Psoas muscle (tissue), 8 donors: ENCODE measurements at regions of chr17 and their contacts with region 1.

Region 1: DNA sequence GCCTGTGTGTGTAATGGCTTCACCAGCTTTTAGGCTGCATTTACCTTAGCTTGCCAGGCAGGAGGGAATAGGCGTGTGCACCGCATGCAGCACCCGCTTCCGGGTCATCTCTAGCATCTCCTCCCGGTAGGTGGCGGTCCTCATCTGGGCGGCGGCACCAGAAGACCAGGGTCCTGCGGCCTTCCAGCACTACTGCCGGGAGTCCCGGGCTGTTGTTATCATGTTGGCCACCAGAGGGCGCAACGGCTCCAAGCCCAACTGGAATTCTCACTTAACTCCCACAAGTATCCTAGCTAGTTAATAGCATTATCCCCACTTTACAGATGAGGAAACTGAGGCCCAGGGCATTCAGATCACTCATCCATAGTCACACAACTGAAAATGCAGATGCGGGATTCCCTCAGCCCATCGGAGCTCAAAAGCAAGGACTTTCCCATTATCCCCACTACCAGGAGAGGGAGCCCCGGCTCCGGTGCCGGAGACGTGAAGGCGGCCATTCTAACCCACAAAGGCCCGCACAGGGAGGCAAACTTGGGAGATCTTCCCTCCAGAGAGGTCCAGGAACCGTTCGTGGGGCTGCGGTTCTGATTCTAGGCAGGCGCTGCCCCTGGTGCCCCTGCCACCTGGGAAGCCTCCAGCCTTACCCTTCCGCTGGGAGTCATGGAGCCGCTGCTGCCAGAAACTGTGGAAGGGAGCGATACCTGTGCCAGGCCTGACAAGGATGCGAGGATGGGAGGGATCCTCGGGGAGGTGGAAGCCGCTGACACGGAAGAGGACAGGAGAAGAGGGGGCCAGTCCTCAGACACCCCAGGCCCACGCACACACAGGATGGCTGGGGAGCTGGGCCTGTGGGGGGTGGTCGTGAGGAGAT is 23.9 kb downstream of the LGALS9 start:
- DNase-seq: peak; percentile 69 to 81
- ATAC-seq: peak; percentile 42 to 67 (median 63)
- H3K4me3 ChIP-seq: no peak overlapping the region
- H3K27ac ChIP-seq: no peak overlapping the region
- H3K4me1 ChIP-seq: no peaks in the 10 kb centered on the region
- H3K27me3 ChIP-seq: no peaks in the 10 kb centered on the region
- CTCF ChIP-seq: peak; percentile 92

Region 2: DNA sequence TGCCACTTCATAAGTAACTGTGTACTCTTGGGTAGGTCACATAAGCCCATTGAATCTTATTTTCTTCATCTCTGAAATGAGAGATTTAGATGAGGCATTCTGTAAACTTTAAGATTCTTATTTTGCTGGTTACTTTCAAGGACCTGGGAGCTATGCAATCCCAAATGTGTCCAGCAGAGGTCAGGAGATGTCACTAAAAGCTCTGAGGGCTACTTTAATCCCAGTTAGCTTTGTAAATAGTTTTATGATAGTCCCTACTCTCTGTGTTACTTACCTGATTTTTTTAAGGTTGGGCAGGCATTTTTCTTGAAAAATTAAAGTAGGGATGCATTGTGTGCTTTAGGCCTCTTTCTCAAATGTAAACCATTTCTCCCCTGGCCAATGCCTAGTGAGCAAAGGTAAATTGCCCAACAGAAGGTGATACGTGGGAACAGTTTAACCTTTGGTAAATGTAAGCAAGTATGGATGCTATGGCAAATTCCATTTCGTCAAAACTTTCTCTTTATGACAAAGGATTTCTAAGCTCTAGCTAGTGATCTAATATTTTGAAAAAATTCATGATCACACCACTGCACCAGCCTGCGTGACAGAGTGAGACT is 418.1 kb before region 1 on chr17:
- intact Hi-C with region 1: loop called (anchors 2 to 10 kb)
- DNase-seq: peak; percentile 57 to 67
- ATAC-seq: peak; percentile 85 to 90 (median 88)
- H3K4me3 ChIP-seq: no peak overlapping the region
- H3K27ac ChIP-seq: no peak overlapping the region
- H3K4me1 ChIP-seq: no peaks in the 10 kb centered on the region
- H3K27me3 ChIP-seq: no peaks in the 10 kb centered on the region
- CTCF ChIP-seq: peak; percentile 99

Region 3: DNA sequence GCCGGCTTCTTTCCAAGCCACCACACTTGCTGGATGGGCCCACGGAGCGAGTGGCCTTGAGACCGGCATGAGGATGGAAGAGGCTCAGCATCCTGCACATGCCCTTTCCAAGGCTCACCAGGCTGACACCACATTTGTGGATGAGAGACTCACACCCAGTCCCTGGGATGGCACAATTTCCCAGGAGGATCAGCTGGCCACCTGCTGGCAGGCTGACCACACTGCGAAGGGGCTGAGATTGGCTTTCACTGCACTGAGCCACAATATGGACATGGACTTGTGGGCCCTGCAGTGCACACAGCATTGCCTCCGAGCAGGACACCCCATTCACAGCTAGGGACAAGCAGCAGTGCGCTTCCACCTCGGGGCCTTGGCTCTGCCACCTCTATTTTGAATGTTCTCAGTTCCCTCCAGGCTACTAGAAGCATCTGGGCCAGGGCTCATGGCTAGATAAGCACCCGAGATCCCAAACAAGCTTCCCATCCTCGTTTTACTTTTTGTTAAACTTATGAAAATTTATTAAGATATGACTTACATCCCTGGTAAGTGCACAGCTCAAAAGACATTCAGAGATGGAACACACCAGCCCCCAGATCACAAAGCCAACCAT is 223.9 kb before region 1 on chr17:
- intact Hi-C with region 1: no loop called
- DNase-seq: peak in 1 of 2 donors; percentile 31
- ATAC-seq: peak in 3 of 4 donors; percentile 49 to 67 (median 50)
- H3K4me3 ChIP-seq: no peak overlapping the region
- H3K27ac ChIP-seq: no peak overlapping the region
- H3K4me1 ChIP-seq: no peaks in the 10 kb centered on the region
- H3K27me3 ChIP-seq: no peaks in the 10 kb centered on the region
- CTCF ChIP-seq: peak; percentile 40

Region 4: GRCh38 chr17:27601069-27601975 is 53.6 kb before region 1 on chr17:
- intact Hi-C with region 1: loop called (anchors 1 kb)
- DNase-seq: peak; percentile 66 to 81
- ATAC-seq: peak; percentile 59 to 76 (median 60)
- H3K4me3 ChIP-seq: no peak overlapping the region
- H3K27ac ChIP-seq: peak overlapping the region; percentile 7
- H3K4me1 ChIP-seq: no peaks in the 10 kb centered on the region
- H3K27me3 ChIP-seq: no peaks in the 10 kb centered on the region
- CTCF ChIP-seq: peak; percentile 96

Region 5: DNA sequence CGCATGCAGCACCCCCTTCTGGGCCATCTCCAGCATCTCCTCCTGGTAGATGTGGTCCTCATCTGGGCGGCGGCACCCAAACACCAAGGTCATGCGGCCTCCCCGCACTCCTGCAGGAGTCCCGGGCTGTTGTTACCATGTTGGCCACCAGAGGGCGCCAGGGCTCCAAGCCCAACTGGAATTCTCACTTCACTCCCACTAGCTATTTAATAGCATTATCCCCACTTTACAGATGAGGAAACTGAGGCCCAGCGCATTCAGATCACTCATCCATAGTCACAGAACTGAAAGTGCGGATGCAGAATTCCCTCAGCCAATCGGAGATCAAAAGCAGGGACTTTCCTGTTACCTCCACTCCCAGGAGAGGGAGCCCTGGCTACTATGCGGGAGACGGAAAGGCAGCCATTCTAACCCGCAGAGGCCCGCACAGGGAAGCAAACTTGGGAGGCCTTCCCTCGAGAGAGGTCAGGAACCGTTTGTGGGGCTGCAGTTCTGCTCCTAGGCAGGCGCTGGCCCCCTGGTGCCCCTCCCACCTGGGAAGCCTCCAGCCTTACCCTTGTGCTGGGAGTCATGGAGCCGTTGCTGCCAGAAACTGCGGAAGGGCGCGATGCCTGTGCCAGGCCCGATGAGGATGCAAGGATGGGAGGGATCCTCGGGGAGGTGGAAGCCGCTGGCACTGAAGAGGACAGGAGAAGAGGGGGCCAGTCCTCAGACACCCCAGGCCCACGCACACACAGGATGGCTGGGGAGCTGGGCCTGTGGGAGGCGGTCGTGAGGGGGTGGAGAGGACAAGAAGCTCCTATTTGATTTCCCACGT is 105.4 kb after region 1 on chr17:
- intact Hi-C with region 1: loop called (anchors 2 to 5 kb)
- DNase-seq: peak; percentile 63 to 76
- ATAC-seq: peak in 3 of 4 donors; percentile 46 to 65 (median 56)
- H3K4me3 ChIP-seq: no peak overlapping the region
- H3K27ac ChIP-seq: no peak overlapping the region
- H3K4me1 ChIP-seq: no peaks in the 10 kb centered on the region
- H3K27me3 ChIP-seq: no peaks in the 10 kb centered on the region
- CTCF ChIP-seq: peak; percentile 91

Region 6: DNA sequence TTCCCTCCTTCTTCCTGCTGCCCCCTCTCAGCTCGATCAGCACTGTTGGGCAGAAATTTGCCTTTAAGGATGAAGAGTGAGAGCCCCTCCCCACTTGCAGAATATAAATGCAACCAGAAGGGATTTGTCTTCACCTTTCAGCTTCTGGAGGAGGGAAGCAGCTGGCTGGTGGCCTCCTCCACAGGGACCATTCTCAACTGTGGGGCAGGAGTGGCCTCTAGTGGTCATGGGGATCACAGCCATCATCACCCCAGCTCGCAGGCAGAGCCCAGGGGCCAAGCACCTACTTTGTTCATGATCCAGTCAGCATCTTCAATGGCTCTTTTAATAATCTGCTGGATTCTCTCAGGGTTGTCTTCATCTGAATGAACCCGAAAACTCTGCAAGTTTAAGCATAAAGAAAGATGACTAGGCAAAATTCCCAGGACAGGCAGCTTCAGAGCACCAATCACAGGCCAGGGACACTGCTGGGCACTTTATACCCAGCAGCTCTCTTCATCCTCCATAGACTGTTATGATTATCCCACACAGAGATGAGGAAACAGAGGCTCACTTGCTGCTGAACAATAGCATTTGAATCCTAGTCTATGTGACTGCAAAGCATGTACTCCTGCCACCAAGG is 225.2 kb after region 1 on chr17:
- intact Hi-C with region 1: loop called in 1 of 2 experiments (anchors 10 kb)
- DNase-seq: peak; percentile 64 to 68
- ATAC-seq: peak; percentile 80 to 91 (median 87)
- H3K4me3 ChIP-seq: no peak overlapping the region
- H3K27ac ChIP-seq: no peak overlapping the region
- H3K4me1 ChIP-seq: no peaks in the 10 kb centered on the region
- H3K27me3 ChIP-seq: no peaks in the 10 kb centered on the region
- CTCF ChIP-seq: peak; percentile 72